ENCODE measurements at regions of chr1 and their contacts with region 1.

Region 1: DNA sequence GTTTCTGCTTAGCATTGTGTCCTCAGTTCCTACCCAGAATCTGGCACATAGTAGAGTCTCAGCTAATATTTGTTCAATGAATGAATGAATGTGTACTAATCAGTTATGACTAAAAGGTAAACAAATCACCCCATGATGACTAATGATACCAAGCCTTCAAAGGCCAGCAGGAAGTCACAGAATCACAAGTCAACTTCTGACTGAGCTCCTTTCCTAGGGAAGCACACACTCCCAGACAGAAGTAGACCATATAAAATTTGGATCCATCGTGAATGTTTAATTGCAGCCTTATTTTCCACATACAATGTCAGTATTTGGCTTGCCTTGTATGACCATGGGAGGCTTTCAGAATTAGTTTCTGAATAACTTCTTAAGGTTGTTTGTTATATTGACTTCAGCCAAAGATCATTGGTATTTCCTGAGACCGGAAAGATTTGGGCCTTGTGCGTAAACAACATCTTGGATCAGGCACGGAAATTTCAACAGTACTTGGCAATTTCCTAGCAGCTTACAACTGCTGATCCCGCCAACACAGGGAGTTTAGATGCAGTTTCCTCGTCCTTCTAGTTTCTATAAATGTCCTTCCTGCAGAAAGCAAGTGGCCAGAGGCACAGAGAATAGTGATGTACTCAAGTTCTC is 185.9 kb upstream of the ATP1B1 start:
- DNase-seq: peak in 1 of 42 donors; percentile 6

Region 2: GRCh38 chr1:168842916-168843315 is 77.7 kb before region 1 on chr1:
- intact Hi-C with region 1: no loop called
- DNase-seq: no peak

Region 3: GRCh38 chr1:168972887-168973286 is 52.3 kb after region 1 on chr1:
- intact Hi-C with region 1: loop called (anchors 10 kb)
- DNase-seq: no peak

Measured in head of caudate nucleus (tissue), 42 donors.